ENCODE measurements at regions of chr9 and their contacts with region 1.

Region 1: GRCh38 chr9:130927995-130928900 is 10.8 kb downstream of the FIBCD1 start:
- H3K4me3 ChIP-seq: no peak overlapping the region
- H3K27ac ChIP-seq: peak overlapping the region; percentile 19; the same call in 1 of the 2 replicates
- H3K4me1 ChIP-seq: peaks cover 3% of the 10 kb centered on the region; the same call in 1 of the 2 replicates
- CTCF ChIP-seq: no peak

Region 2: DNA sequence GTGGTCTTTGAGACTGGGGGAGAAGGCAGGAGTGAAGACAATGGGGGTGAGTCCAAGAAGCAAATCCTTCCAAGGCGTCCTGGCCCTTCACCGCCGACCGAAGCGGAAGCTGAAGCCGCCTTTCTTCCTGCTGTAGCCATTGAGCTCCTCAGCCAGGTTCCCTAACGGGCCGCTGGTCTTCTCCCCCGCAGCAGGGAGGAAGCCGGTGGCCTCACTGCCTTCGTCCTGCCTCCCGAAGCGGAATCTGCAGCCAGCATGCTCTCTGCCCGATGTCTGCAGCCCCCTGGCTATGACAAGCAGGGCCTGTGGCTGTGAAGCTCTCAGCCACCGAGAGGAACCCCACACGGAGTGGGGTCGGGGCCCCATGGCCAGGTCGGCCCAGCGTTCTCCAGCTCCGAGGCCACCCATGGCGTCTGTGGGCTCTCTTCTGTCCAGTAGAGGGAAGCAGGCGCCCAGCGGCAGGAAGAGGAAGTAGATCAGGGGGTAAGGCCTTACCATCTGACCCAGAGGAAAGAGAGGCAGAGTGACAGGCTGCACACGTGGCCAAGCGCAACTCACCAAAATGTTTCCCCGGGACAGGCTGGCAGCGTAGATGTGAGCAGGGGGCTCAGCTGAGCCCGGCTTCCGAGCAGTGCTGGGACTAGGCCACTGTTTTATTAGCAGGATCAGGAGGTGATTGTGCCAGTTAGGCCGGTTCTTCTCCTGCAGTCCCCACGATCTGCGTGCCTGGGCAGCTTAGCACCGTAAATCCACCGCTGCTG is 34.7 kb before region 1 on chr9:
- CTCF ChIA-PET with region 1: interaction called, 9 read pairs
- POLR2A ChIA-PET with region 1: interaction called, 10 read pairs
- H3K4me3 ChIP-seq: no peak overlapping the region
- H3K27ac ChIP-seq: no peak overlapping the region
- H3K4me1 ChIP-seq: no peaks in the 10 kb centered on the region
- CTCF ChIP-seq: peak; percentile 53

Measured in HEK293 (cell line).